ENCODE measurements at regions of chr4 and their contacts with region 1.

Region 1: GRCh38 chr4:151117371-151117962 is 18.0 kb downstream of the RPS3A start:
- DNase-seq: peak in 3 of 5 donors; percentile 48 to 54 (median 52)
- ATAC-seq: peak; percentile 41 to 59 (median 53)
- H3K4me3 ChIP-seq: no peak overlapping the region
- H3K27ac ChIP-seq: peak overlapping the region in 5 of 12 donors; percentile 10 to 48 (median 28)
- H3K4me1 ChIP-seq: peaks cover 0 to 13% (median 0%) of the 10 kb centered on the region in 12 donors
- H3K27me3 ChIP-seq: no peaks in the 10 kb centered on the region
- CTCF ChIP-seq: peak; percentile 62 to 85 (median 74)
- POLR2A ChIP-seq: no peak

Region 2: DNA sequence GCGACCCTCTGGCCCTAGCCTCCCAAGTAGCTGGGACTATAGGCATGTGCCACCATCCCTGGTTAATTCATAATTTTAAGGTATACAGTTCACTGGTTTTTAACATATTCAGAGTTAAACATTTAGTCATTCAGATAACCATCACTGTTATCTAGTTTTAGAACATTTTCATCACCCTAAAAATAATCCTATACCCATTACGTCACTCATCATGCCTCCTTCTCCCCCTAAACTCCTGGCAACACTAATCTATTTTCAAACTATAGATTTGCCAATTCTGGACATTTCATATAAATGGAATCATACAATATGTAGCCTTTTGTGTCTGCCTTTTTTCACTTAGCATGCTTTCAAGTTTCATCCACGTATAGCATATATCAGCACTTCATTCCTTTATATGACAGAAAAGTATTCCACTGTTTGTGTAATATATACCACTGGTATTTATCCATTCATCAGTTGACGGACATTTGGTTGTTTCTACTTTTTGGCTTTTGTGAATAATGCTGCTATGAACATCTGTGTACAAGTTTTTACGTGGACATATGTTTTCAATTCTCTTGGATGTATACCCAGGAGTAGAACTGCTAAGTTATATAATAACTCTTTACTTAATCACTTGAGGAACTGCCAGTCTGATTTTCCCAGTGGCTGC is 50.0 kb before region 1 on chr4:
- intact Hi-C with region 1: no loop called
- DNase-seq: no peak
- ATAC-seq: no peak
- H3K4me3 ChIP-seq: no peak overlapping the region
- H3K27ac ChIP-seq: no peak overlapping the region
- H3K4me1 ChIP-seq: no peaks in the 10 kb centered on the region
- H3K27me3 ChIP-seq: no peaks in the 10 kb centered on the region
- CTCF ChIP-seq: no peak
- POLR2A ChIP-seq: no peak

Region 3: DNA sequence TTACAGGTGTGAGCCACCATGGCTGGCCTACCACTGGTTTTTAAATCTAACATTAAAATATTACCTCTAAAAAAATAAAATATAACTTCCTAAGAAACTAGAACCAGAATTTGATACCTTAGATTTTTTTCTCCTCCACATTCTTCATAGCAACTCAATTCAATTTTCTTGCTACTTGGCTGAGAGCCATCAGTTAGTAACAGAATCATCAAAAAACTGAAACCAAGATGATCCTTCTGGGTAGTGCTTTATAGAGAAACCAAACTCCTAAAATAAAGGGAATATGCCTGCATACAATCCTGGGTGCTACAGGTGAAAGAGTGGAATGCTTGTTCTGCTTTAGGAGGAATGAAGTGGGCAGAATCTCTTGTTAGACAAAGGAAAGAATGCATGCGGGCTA is 46.4 kb after region 1 on chr4:
- intact Hi-C with region 1: no loop called
- DNase-seq: no peak
- ATAC-seq: no peak
- H3K4me3 ChIP-seq: no peak overlapping the region
- H3K27ac ChIP-seq: no peak overlapping the region
- H3K4me1 ChIP-seq: peaks cover 0 to 32% (median 12%) of the 10 kb centered on the region in 12 donors
- H3K27me3 ChIP-seq: no peaks in the 10 kb centered on the region
- CTCF ChIP-seq: no peak
- POLR2A ChIP-seq: no peak

Region 4: GRCh38 chr4:151227731-151228130 is 110.3 kb after region 1 on chr4:
- intact Hi-C with region 1: no loop called
- DNase-seq: peak in 4 of 5 donors; percentile 49 to 72 (median 64)
- ATAC-seq: peak; percentile 79 to 89 (median 83)
- H3K4me3 ChIP-seq: peak overlapping the region in 10 of 12 donors; percentile 22 to 60 (median 41)
- H3K27ac ChIP-seq: peak overlapping the region; percentile 35 to 78 (median 60)
- H3K4me1 ChIP-seq: peaks cover 0 to 50% (median 26%) of the 10 kb centered on the region in 12 donors
- H3K27me3 ChIP-seq: no peaks in the 10 kb centered on the region
- CTCF ChIP-seq: no peak
- POLR2A ChIP-seq: no peak

Region 5: DNA sequence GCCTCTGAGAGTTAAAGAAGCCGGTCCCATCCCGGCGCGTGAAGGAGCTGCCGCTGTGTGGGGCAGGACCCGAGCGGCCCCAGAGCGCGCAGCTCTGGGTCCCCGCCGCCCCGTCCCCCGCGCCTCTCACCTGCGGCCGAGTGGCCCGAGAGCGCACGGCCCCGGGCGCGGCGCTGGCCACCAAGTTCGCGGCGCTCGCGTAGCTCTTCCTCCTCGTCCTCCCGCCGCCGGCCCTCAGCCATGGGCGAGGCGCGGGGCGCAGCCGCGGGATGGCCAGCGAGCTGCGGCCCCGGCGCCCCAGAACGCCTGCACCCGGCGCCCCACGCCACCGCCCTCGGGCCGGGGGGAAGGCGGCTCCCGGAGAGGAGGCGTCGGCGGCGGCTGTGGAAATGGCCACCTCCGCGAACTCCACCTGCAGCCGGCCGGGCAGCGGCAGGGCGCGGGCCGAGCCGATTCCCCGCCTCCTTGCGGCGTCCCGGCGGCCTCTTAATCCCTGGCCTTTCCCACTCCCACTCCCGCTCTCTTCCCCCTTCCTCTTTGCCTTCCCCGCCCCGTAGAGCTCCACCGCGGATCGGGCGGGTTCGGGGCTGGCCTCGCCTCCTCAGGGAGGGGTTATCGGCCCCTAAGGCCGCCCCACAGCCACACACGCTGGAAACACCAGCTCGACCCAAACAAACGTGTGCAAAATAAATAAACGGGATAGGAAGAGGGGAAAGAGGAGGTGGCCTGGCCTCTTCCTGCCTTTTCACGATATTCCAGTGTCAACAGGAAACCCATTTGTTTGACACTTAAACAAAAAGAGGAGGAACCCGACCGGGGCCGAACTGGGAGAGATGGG is 207.9 kb after region 1 on chr4 and contains the start of gene SH3D19:
- intact Hi-C with region 1: loop called in 1 of 10 experiments (anchors 10 kb)
- DNase-seq: peak; percentile 79 to 88 (median 83)
- ATAC-seq: peak; percentile 88 to 96 (median 92)
- H3K4me3 ChIP-seq: peak within 1 kb of the TSS; percentile 68 to 93 (median 75)
- H3K27ac ChIP-seq: peak within 1 kb of the TSS; percentile 85 to 96 (median 94)
- H3K4me1 ChIP-seq: peaks cover 0 to 37% (median 21%) of the 10 kb centered on the region in 12 donors
- H3K27me3 ChIP-seq: peaks cover 0 to 18% (median 0%) of the 10 kb centered on the region in 9 donors
- CTCF ChIP-seq: peak in 3 of 12 donors; percentile 8 to 21 (median 16)
- POLR2A ChIP-seq: peak in 1 of 2 donors; percentile 63
- total RNA-seq, gene SH3D19: 91.1 to 173 (median 139) TPM

Region 6: DNA sequence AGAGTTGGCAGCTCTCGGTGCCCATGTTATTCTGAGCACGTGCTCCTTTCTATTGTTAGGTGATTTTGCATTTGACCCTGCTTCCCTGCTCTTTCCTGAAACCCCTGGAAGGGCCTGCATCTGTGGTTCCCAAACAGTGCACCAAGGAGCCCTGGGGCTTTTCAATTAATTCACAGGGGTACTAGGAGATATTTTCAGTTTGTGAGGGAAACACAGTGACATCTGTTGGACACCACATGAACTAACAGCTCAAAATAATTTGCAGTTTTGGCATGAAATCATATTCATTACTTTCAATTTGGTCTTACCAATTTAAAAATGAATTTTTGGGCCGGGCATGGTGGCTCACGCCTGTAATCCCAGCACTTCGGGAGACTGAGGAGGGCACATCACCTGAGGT is 486.8 kb after region 1 on chr4:
- intact Hi-C with region 1: loop called in 1 of 10 experiments (anchors 10 kb)
- DNase-seq: no peak
- ATAC-seq: no peak
- H3K4me3 ChIP-seq: no peak overlapping the region
- H3K27ac ChIP-seq: no peak overlapping the region
- H3K4me1 ChIP-seq: peaks cover 0 to 9% (median 0%) of the 10 kb centered on the region in 12 donors
- H3K27me3 ChIP-seq: no peaks in the 10 kb centered on the region
- CTCF ChIP-seq: peak in 8 of 12 donors; percentile 14 to 44 (median 18)
- POLR2A ChIP-seq: no peak

Region 7: GRCh38 chr4:152398060-152398459 is 1280.6 kb after region 1 on chr4:
- intact Hi-C with region 1: loop called in 1 of 10 experiments (anchors 10 kb)
- DNase-seq: no peak
- ATAC-seq: no peak
- H3K4me3 ChIP-seq: no peak overlapping the region
- H3K27ac ChIP-seq: no peak overlapping the region
- H3K4me1 ChIP-seq: peaks cover 0 to 24% (median 0%) of the 10 kb centered on the region in 12 donors
- H3K27me3 ChIP-seq: no peaks in the 10 kb centered on the region
- CTCF ChIP-seq: peak in 10 of 12 donors; percentile 8 to 44 (median 29)
- POLR2A ChIP-seq: no peak

Measured in heart left ventricle (tissue), 16 donors.